ENCODE measurements at regions of chr1 and their contacts with region 1.

Region 1: GRCh38 chr1:178542560-178543356 is 29.8 kb downstream of the TEX35 start:
- DNase-seq: peak; percentile 83
- H3K4me3 Mint-ChIP-seq: peak overlapping the region; percentile 87
- H3K27ac Mint-ChIP-seq: peak overlapping the region; percentile 72
- H3K4me1 Mint-ChIP-seq: peaks cover 3% of the 10 kb centered on the region
- H3K27me3 Mint-ChIP-seq: no peaks in the 10 kb centered on the region

Region 2: DNA sequence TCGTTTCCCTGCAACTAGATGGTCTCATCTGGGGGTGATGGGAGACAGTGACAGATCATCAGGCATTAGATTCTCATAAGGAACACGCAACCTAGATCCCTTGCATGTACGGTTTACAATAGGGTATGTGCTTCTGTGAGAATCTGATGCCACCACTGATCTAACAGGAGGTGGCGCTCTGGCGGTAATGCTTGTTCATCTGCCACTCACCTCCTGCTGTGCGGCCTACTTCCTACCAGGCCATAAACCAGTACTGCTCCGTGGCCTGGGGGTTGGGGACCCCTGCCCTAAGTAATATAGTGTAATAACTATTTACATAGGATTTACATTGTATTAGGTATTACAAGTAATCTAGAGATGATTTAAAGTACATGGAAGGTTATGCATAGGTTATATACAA is 180.9 kb before region 1 on chr1:
- intact Hi-C with region 1: no loop called
- DNase-seq: no peak
- H3K4me3 Mint-ChIP-seq: no peak overlapping the region
- H3K27ac Mint-ChIP-seq: no peak overlapping the region
- H3K4me1 Mint-ChIP-seq: no peaks in the 10 kb centered on the region
- H3K27me3 Mint-ChIP-seq: no peaks in the 10 kb centered on the region

Region 3: GRCh38 chr1:178477841-178478240 is 64.9 kb before region 1 on chr1:
- intact Hi-C with region 1: no loop called
- DNase-seq: no peak
- H3K4me3 Mint-ChIP-seq: no peak overlapping the region
- H3K27ac Mint-ChIP-seq: no peak overlapping the region
- H3K4me1 Mint-ChIP-seq: no peaks in the 10 kb centered on the region
- H3K27me3 Mint-ChIP-seq: no peaks in the 10 kb centered on the region

Region 4: DNA sequence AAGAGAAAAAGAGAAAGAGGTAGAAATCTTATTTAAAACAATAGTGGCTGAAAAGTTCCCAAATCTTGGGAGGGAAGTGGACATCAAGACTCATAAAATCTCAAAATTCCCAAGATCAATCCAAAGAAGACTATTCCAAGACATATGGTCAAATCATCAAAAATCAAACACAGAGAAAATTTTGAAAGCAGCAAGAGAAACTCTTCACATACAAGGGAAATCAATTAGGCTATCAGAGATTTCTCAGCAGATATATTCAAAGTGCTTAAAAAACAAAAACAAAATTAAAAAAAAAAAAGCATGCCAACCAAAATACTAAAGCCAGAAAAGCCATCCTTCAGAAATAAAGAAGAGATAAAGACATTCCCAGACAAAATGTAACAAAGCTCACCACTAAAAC is 129.7 kb after region 1 on chr1:
- intact Hi-C with region 1: no loop called
- DNase-seq: no peak
- H3K4me3 Mint-ChIP-seq: no peak overlapping the region
- H3K27ac Mint-ChIP-seq: no peak overlapping the region
- H3K4me1 Mint-ChIP-seq: peaks cover 6% of the 10 kb centered on the region
- H3K27me3 Mint-ChIP-seq: no peaks in the 10 kb centered on the region

Region 5: GRCh38 chr1:178725603-178726517 is 183.1 kb after region 1 on chr1:
- intact Hi-C with region 1: loop called (anchors 2 kb)
- DNase-seq: peak; percentile 53
- H3K4me3 Mint-ChIP-seq: peak overlapping the region; percentile 80
- H3K27ac Mint-ChIP-seq: no peak overlapping the region
- H3K4me1 Mint-ChIP-seq: peaks cover 12% of the 10 kb centered on the region
- H3K27me3 Mint-ChIP-seq: peaks cover 39% of the 10 kb centered on the region

Region 6: DNA sequence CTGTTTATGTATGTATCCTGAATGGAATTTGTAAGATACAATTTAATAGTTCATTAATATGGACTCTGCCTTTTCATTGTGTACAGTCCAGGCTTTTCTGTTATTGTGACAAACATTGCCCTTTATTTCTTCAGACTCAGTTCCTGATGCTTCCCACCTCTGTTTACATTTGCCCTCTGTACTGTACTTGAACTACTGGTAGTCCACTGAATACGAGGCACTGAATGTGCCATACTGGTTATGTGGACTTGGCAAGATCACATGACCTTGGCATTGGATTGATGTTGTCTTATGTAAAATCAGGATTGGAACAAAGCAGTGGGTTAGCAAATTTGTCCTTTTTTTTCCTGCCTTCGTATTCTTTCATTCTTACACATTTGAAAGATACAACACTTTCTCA is 210.1 kb after region 1 on chr1:
- intact Hi-C with region 1: loop called (anchors 1 kb)
- DNase-seq: no peak
- H3K4me3 Mint-ChIP-seq: no peak overlapping the region
- H3K27ac Mint-ChIP-seq: no peak overlapping the region
- H3K4me1 Mint-ChIP-seq: no peaks in the 10 kb centered on the region
- H3K27me3 Mint-ChIP-seq: no peaks in the 10 kb centered on the region

Region 7: DNA sequence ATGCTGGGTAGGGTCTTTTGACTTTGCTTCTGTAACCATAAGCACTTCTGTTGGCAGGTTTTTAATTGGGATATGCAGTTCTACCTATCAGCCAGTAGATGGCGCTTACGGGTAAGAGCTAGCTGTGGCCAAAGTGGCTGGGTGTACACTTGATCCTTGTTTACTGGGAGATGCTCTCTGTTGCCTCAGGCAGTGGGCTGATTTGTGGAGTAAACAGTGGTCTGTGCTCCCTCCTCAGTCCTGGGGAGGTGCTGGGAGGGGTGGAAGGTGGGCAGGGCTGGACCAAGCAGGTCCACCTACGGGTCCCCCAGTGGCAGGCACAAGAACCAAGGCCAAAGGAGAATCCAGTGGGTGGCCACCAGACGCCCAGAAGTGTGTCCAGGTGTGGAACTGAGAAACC is 225.7 kb after region 1 on chr1:
- intact Hi-C with region 1: loop called (anchors 5 kb)
- DNase-seq: peak; percentile 9
- H3K4me3 Mint-ChIP-seq: no peak overlapping the region
- H3K27ac Mint-ChIP-seq: no peak overlapping the region
- H3K4me1 Mint-ChIP-seq: no peaks in the 10 kb centered on the region
- H3K27me3 Mint-ChIP-seq: no peaks in the 10 kb centered on the region

Region 8: DNA sequence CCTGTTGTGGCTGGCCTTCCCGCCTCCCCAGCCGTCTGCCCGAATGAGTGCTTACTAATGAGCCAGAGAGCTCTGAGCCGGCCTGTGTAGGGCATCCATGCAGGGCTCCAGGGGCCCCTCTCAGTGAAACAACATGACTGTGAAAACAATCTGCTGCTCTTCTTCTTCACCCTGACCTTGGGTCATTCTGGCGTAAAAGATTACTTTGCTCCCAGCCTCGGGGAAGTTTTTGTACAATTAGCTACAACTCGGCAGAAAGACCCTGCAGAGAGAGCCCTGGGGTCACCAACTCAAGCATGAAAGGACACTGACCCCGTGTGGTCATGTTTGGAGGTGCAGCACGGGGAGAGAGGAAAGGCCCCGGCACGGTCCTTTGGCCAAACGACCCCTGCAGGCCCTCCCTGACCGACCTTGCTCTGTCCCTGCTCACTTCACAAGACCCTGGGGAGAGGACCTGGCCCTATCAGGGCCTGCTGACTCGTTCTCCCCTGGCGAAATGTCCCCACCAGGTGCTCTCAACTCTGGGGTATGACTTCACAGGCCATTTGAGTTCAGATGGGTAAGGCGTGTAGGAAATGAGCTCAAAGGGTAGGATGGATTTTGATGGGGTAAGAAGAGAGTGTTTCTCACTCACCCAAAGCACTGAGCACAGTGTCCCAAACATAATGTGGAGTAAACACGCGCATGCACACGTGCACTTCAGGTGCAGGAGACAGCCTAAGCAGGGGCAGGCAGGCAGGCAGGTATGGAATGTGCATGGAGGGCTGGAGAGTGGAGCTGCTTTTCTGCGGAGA is 460.0 kb after region 1 on chr1:
- intact Hi-C with region 1: loop called (anchors 2 kb)
- DNase-seq: peak; percentile 41
- H3K4me3 Mint-ChIP-seq: no peak overlapping the region
- H3K27ac Mint-ChIP-seq: no peak overlapping the region
- H3K4me1 Mint-ChIP-seq: peaks cover 8% of the 10 kb centered on the region
- H3K27me3 Mint-ChIP-seq: peaks cover 3% of the 10 kb centered on the region